Activated CD4-positive, alpha-beta memory T cell treated with anti-CD3 and anti-CD28 coated beads for 36 hours (primary cell): ENCODE measurements at regions of chr1 and their contacts with region 1.

Region 1: GRCh38 chr1:35564037-35564883 is 6.7 kb downstream of the NCDN start:
- DNase-seq: peak; percentile 87
- H3K4me3 Mint-ChIP-seq: no peak overlapping the region
- H3K27ac Mint-ChIP-seq: peak overlapping the region; percentile 44
- H3K4me1 Mint-ChIP-seq: peaks cover 22% of the 10 kb centered on the region
- H3K27me3 Mint-ChIP-seq: no peaks in the 10 kb centered on the region

Region 2: DNA sequence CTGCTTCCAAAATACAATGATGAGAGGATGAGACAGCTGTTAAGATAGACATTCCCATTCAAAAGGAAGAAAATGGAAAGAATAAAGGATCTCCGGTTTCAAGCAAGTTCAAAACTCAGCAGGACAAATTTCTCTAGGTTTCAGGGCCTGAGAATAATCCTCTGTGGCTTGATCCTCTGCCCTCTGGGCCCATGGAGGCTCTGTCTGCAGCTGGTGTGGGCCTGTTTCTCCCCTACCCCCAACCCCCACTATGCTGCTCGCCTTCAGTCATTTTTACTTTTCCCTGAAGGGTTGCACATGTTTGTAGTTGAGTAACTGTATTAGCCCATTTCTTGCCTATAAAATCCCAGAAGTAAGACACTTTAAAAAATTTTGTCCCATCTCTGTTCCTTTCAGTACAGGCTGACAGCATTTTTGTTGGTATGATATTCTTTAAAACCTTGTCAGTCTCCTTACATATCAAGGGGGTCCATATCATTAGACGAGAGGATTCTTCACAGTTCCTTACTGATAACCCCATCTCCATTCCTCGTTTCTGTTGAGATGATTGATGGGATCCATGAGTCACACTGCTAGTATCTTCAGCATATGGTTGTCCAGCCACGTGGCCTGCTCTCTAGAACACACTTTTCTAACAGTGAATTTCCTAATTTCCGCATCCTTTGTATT is 285.2 kb before region 1 on chr1:
- CTCF ChIA-PET with region 1: no interaction called
- POLR2A ChIA-PET with region 1: no interaction called
- intact Hi-C with region 1: no loop called
- DNase-seq: no peak
- H3K4me3 Mint-ChIP-seq: no peak overlapping the region
- H3K27ac Mint-ChIP-seq: no peak overlapping the region
- H3K4me1 Mint-ChIP-seq: peaks cover 2% of the 10 kb centered on the region
- H3K27me3 Mint-ChIP-seq: no peaks in the 10 kb centered on the region

Region 3: GRCh38 chr1:35443768-35444518 is 120.3 kb before region 1 on chr1:
- CTCF ChIA-PET with region 1: interaction called, 245 read pairs
- POLR2A ChIA-PET with region 1: no interaction called
- intact Hi-C with region 1: no loop called
- DNase-seq: no peak
- H3K4me3 Mint-ChIP-seq: no peak overlapping the region
- H3K27ac Mint-ChIP-seq: peak overlapping the region; percentile 2
- H3K4me1 Mint-ChIP-seq: peaks cover 16% of the 10 kb centered on the region
- H3K27me3 Mint-ChIP-seq: no peaks in the 10 kb centered on the region

Region 4: GRCh38 chr1:35499652-35500176 is 64.5 kb before region 1 on chr1:
- CTCF ChIA-PET with region 1: no interaction called
- POLR2A ChIA-PET with region 1: no interaction called
- intact Hi-C with region 1: no loop called
- DNase-seq: peak; percentile 44
- H3K4me3 Mint-ChIP-seq: no peak overlapping the region
- H3K27ac Mint-ChIP-seq: no peak overlapping the region
- H3K4me1 Mint-ChIP-seq: peaks cover 34% of the 10 kb centered on the region
- H3K27me3 Mint-ChIP-seq: no peaks in the 10 kb centered on the region

Region 5: DNA sequence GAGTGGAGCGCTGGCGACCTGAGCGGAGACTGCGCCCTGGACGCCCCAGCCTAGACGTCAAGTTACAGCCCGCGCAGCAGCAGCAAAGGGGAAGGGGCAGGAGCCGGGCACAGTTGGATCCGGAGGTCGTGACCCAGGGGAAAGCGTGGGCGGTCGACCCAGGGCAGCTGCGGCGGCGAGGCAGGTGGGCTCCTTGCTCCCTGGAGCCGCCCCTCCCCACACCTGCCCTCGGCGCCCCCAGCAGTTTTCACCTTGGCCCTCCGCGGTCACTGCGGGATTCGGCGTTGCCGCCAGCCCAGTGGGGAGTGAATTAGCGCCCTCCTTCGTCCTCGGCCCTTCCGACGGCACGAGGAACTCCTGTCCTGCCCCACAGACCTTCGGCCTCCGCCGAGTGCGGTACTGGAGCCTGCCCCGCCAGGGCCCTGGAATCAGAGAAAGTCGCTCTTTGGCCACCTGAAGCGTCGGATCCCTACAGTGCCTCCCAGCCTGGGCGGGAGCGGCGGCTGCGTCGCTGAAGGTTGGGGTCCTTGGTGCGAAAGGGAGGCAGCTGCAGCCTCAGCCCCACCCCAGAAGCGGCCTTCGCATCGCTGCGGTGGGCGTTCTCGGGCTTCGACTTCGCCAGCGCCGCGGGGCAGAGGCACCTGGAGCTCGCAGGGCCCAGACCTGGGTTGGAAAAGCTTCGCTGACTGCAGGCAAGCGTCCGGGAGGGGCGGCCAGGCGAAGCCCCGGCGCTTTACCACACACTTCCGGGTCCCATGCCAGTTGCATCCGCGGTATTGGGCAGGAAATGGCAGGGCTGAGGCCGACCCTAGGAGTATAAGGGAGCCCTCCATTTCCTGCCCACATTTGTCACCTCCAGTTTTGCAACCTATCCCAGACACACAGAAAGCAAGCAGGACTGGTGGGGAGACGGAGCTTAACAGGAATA is 13.1 kb after region 1 on chr1:
- CTCF ChIA-PET with region 1: interaction called, 16 read pairs
- POLR2A ChIA-PET with region 1: interaction called, 5 read pairs
- intact Hi-C with region 1: no loop called
- DNase-seq: peak; percentile 76
- H3K4me3 Mint-ChIP-seq: peak overlapping the region; percentile 72
- H3K27ac Mint-ChIP-seq: peak overlapping the region; percentile 58
- H3K4me1 Mint-ChIP-seq: peaks cover 22% of the 10 kb centered on the region
- H3K27me3 Mint-ChIP-seq: peaks cover 5% of the 10 kb centered on the region

Region 6: DNA sequence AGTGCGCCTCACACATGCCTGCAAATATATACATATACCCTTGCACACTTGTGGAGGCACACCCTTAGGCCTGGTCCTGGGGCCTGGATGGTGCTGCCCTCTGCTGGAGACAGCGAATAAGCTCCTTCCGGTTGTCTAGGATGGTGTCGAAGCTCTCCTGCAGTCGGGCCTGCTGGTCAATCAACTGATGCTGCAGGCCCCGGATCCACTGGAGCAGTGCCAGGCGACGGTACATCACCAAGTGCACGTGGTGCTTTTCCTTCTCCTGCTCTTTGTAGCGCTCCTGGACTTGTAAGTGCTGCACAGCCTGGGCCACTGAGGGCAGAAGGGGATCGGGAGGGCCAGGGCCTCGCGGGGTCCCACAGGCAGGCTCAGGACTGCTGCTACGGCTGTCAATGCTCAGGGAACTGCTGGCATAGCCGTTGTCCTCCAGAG is 151.3 kb after region 1 on chr1:
- CTCF ChIA-PET with region 1: interaction called, 70 read pairs
- POLR2A ChIA-PET with region 1: interaction called, 4 read pairs
- intact Hi-C with region 1: loop called (anchors 1 kb)
- DNase-seq: peak; percentile 86
- H3K4me3 Mint-ChIP-seq: no peak overlapping the region
- H3K27ac Mint-ChIP-seq: no peak overlapping the region
- H3K4me1 Mint-ChIP-seq: peaks cover 32% of the 10 kb centered on the region
- H3K27me3 Mint-ChIP-seq: no peaks in the 10 kb centered on the region

Region 7: DNA sequence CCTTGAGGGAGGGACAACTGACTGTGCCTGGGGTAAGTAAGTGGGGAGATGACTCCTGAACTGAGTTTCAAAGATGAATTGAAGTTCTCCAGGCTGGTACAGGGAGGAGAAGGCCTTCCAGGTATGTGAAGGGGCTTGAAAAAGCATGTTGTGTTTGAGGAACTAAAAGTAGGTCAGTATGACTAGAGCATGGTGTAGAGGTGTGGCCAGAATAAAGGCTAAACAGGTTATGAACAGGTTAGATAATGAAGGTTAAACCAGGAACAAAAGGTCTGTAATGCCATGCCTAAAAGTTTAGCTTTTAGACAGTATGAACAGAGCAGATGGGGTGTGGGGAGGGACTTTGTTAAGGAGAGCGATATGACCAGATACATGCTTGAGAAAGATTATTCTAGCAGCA is 212.8 kb after region 1 on chr1:
- CTCF ChIA-PET with region 1: interaction called, 18 read pairs
- POLR2A ChIA-PET with region 1: no interaction called
- intact Hi-C with region 1: loop called (anchors 1 kb)
- DNase-seq: no peak
- H3K4me3 Mint-ChIP-seq: no peak overlapping the region
- H3K27ac Mint-ChIP-seq: no peak overlapping the region
- H3K4me1 Mint-ChIP-seq: peaks cover 5% of the 10 kb centered on the region
- H3K27me3 Mint-ChIP-seq: no peaks in the 10 kb centered on the region

Region 8: DNA sequence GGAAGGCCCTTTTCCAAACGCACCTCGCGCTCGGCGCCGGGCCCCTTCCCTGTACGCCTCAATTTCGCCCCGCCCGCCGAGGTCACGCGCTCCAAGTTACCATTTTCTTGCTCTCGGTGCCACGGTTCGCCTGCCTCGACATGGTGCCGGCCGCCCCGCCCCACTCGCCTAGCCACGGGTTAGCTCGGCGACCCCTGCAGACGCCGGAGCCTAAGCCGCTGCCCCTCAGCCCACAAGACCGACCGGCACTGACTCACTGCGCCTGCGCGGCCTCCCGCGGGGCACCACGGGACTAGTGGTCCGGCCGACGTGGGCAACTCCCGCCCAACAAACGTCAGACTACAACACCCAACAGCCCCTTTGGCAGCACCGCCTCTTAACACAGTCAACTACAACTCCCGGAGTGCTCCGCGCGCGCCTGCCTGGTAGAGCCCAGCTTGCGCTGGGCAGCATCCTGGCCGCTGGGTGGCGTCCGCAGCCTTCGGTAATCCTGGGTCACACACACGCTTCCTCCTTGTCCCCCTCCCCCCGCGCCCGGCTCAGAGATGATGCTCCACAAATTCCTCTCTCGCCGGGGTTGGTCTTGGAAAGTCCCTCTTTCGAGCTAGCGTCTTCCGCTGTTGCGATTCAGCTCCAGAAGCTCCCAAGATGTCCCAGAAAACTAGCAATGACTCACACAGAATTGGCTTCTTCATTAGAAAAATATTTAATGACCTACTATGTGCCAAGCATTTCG is 585.1 kb after region 1 on chr1 and contains the start of gene TRAPPC3:
- CTCF ChIA-PET with region 1: no interaction called
- POLR2A ChIA-PET with region 1: no interaction called
- intact Hi-C with region 1: no loop called
- DNase-seq: peak; percentile 100
- H3K4me3 Mint-ChIP-seq: peak within 1 kb of the TSS; percentile 100
- H3K27ac Mint-ChIP-seq: peak within 1 kb of the TSS; percentile 92
- H3K4me1 Mint-ChIP-seq: peaks cover 67% of the 10 kb centered on the region
- H3K27me3 Mint-ChIP-seq: no peaks in the 10 kb centered on the region
- total RNA-seq, gene TRAPPC3: 56.7 to 56.8 TPM